ENCODE measurements at regions of chr9 and their contacts with region 1.

Region 1: DNA sequence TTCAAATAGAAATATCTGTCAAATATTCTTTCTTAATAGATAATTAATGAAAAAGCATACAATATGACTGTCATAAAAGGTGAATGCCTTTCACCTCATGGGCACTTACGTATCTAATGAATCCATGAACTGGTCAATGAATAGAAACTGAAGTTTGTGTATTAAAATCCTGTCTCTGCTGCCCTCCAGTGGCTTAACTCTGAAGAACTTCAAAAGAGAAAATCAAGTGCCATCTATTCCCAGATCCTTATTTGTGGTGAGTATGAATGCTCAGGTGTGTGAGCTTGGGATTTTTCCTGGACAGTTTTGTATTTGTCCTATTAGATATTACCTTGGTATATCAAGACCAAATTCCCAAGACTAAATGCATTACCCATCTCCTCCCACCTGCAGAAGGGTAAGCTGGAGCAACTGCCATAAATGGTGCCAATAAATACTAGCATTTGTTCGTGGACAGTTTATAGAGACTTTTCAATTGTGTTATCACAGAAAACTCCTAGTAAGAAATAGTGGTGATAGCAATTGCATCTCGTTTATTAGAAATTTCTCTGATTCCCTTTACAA is 44.0 kb upstream of the SVEP1 start:
- DNase-seq: peak in 1 of 2 donors; percentile 31
- ATAC-seq: no peak
- H3K4me3 ChIP-seq: no peak overlapping the region
- H3K4me3 Mint-ChIP-seq: no peak overlapping the region
- H3K27ac ChIP-seq: no peak overlapping the region
- H3K27ac Mint-ChIP-seq: no peak overlapping the region
- H3K4me1 ChIP-seq: no peaks in the 10 kb centered on the region
- H3K4me1 Mint-ChIP-seq: no peaks in the 10 kb centered on the region
- H3K27me3 ChIP-seq: no peaks in the 10 kb centered on the region
- H3K27me3 Mint-ChIP-seq: no peaks in the 10 kb centered on the region
- CTCF ChIP-seq: peak; percentile 34

Region 2: GRCh38 chr9:110183208-110184145 is 440.1 kb before region 1 on chr9:
- intact Hi-C with region 1: loop called (anchors 10 kb)
- DNase-seq: peak in 1 of 2 donors; percentile 70
- ATAC-seq: peak; percentile 71 to 82 (median 73)
- H3K4me3 ChIP-seq: no peak overlapping the region
- H3K4me3 Mint-ChIP-seq: no peak overlapping the region
- H3K27ac ChIP-seq: no peak overlapping the region
- H3K27ac Mint-ChIP-seq: no peak overlapping the region
- H3K4me1 ChIP-seq: no peaks in the 10 kb centered on the region
- H3K4me1 Mint-ChIP-seq: peaks cover 6 to 7% of the 10 kb centered on the region in 2 donors
- H3K27me3 ChIP-seq: no peaks in the 10 kb centered on the region
- H3K27me3 Mint-ChIP-seq: no peaks in the 10 kb centered on the region
- CTCF ChIP-seq: peak; percentile 70